ENCODE measurements at regions of chr1 and their contacts with region 1.

Region 1: GRCh38 chr1:204151552-204152309 is at the start of gene ETNK2:
- DNase-seq: peak; percentile 98
- H3K4me3 ChIP-seq: peak within 1 kb of the TSS; percentile 72 to 89
- H3K27ac ChIP-seq: peak within 1 kb of the TSS in 1 of 2 experiments; percentile 72; a peak in 1 of 4 replicates
- H3K4me1 ChIP-seq: peaks cover 3 to 19% of the 10 kb centered on the region in 2 experiments; a peak in 1 of 4 replicates
- H3K27me3 ChIP-seq: no peaks in the 10 kb centered on the region
- CTCF ChIP-seq: no peak
- EP300 ChIP-seq: no peak
- RAD21 ChIP-seq: no peak
- polyA plus RNA-seq, gene ETNK2: 16.1 and 20.1 TPM in 2 replicates

Region 2: DNA sequence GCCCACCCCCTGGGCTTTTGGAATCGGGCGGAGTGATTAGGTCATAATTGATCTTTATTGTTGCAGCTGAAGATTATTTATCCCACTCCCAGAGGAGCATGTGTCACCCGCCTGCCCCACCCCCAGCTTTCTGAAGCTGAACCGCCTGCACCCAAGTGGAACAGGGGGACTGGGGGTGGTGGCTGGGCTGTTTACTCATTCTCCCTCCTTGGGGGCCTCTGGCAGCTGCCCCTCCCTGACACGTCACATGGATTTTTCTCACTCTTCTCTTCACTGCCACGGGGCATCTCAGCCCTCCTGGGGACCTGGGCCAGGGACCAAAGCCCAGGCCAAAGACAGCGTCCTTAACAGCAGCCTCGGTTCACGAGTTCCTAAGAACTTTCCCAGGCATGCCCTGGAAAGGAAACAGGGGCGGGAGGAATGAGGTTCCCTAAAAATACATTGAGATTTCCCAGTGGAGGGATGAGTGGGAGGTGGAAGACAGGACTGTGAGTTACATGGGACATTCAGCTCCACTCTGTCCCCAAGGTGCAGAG is 110.4 kb before region 1 on chr1:
- CTCF ChIA-PET with region 1: no interaction called
- POLR2A ChIA-PET with region 1: no interaction called
- DNase-seq: no peak
- H3K4me3 ChIP-seq: no peak overlapping the region
- H3K27ac ChIP-seq: no peak overlapping the region
- H3K4me1 ChIP-seq: no peaks in the 10 kb centered on the region
- H3K27me3 ChIP-seq: no peaks in the 10 kb centered on the region; the same call in 1 of the 2 replicates
- CTCF ChIP-seq: no peak
- EP300 ChIP-seq: no peak
- RAD21 ChIP-seq: no peak

Region 3: GRCh38 chr1:204136814-204137213 is 14.9 kb before region 1 on chr1:
- CTCF ChIA-PET with region 1: interaction called, 11 read pairs
- POLR2A ChIA-PET with region 1: interaction called, 25 read pairs
- DNase-seq: no peak
- H3K4me3 ChIP-seq: no peak overlapping the region
- H3K27ac ChIP-seq: no peak overlapping the region
- H3K4me1 ChIP-seq: peaks cover 3% of the 10 kb centered on the region in 2 experiments; a peak in 3 of 4 replicates
- H3K27me3 ChIP-seq: no peaks in the 10 kb centered on the region
- CTCF ChIP-seq: no peak
- EP300 ChIP-seq: no peak
- RAD21 ChIP-seq: no peak

Measured in SK-N-SH (cell line).